ENCODE measurements at regions of chr2 and their contacts with region 1.

Region 1: DNA sequence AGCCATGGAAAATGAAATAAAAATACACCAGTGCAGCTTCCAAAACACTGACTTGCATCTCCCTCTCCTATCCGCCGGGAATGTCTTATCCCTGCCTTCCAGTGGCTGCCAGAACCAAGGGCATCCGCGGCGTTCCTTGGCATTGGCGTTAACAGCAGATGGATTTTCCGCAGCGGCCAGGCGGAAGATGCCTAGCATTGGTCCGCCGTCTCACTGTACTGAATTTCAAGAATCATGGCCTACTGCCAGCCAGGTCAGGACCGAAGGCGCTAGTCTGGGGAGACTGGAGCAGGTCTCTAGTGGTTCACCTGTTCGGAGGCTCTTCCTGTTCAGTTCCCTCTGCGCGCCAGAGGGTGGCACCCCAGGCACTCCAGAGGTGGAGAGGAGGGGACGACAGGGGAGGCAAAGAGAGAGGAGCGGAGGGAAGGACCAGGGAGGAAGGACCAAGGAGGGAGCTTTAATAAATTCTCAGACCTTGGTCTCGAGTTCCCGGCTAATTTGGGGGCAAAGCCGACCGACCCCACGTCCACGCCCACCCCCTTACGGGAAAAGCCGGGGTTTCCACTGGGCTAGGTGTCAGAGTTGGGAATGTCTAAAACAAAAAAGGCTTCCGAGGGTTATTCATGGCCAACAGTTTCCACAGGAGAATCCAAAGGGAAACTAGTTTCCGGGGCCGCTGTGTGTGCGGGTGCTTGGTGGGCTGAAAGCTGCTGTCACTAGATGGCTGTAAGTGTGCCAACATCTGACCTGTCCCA is 3.7 kb upstream of the BCL2L11 start:
- H3K4me3 Mint-ChIP-seq: peak overlapping the region; percentile 96
- H3K27ac Mint-ChIP-seq: peak overlapping the region; percentile 98
- H3K4me1 Mint-ChIP-seq: peaks cover 42% of the 10 kb centered on the region
- H3K27me3 Mint-ChIP-seq: peaks cover 55% of the 10 kb centered on the region

Region 2: GRCh38 chr2:110812726-110813645 is 304.0 kb before region 1 on chr2:
- intact Hi-C with region 1: loop called (anchors 5 kb)
- H3K4me3 Mint-ChIP-seq: no peak overlapping the region
- H3K27ac Mint-ChIP-seq: no peak overlapping the region
- H3K4me1 Mint-ChIP-seq: no peaks in the 10 kb centered on the region
- H3K27me3 Mint-ChIP-seq: peaks cover 16% of the 10 kb centered on the region

Region 3: DNA sequence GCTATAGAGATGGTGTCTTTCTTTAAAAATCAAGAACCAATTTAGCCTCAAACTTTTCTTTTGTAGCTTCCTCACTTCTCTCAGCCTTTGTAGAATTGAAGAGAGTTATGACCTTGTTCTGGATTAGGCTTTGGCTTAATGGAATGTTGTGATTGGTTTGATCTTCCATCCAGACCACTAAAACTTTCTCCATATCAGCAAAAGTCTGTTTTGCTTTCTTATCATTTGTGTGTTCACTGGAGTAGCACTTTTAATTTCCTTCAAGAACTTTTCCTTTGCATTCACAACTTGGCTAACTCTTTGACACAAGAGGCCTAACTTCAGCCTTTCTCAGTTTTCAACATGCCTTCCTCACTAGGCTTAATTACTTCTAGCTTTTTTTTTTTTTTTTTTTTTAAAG is 191.5 kb before region 1 on chr2:
- intact Hi-C with region 1: no loop called
- H3K4me3 Mint-ChIP-seq: no peak overlapping the region
- H3K27ac Mint-ChIP-seq: no peak overlapping the region
- H3K4me1 Mint-ChIP-seq: no peaks in the 10 kb centered on the region
- H3K27me3 Mint-ChIP-seq: no peaks in the 10 kb centered on the region

Region 4: DNA sequence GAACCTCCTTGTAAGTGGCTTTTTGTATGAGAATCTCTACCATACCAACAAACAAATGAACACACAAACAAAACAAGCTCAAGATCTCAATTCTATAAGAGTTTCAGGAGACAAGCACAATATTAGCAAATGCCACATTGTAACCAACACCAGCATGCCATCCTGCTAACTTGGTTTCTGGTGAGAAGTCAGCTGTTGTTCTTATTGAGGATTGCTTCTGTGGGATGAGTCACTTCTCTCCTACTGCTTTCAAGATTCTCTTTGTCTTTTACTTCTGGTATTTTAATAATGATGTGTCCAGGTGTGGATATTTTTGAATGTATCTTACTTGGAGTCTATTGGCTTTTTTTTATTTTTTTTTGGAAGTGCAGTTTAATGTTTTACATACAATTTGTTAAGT is 135.4 kb after region 1 on chr2:
- intact Hi-C with region 1: no loop called
- H3K4me3 Mint-ChIP-seq: no peak overlapping the region
- H3K27ac Mint-ChIP-seq: no peak overlapping the region
- H3K4me1 Mint-ChIP-seq: no peaks in the 10 kb centered on the region
- H3K27me3 Mint-ChIP-seq: no peaks in the 10 kb centered on the region